ENCODE measurements at regions of chr17 and their contacts with region 1.

Region 1: DNA sequence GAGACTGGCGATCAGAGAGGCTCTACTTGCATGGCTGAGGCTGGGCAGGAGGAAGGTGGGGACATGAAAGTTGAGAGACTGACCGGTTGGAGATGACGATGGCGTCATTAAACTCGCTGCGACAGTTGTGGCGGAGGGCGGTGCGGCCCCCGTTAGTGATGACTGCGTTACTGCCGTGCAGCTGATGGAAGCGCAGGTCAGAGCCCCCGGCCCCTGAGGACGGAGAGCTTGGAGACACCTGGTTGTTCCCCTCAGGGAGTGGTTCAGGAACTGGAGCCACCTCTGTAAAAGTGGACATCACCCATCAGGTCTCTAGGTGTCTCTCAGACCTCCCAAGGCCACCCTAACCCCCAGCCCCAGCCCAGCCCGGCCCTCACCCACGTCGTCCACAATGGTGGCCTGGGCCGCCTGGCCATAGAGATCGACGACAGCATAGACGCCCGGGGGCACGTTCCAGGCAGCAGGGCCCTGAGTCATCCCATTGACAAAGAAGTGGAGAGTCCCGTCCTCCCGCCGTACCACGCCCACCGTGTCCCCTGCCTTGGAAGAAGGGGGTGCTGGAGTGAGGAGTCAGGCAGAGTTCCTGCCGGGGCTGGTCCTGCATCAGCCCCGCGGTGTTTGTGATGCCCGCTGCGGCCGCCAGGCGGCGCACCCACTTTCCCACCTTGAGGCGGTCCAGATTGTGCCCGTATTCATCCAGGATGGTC is 5.3 kb downstream of the NEURL4 start:
- DNase-seq: peak; percentile 78
- CTCF ChIP-seq: peak; percentile 80

Region 2: DNA sequence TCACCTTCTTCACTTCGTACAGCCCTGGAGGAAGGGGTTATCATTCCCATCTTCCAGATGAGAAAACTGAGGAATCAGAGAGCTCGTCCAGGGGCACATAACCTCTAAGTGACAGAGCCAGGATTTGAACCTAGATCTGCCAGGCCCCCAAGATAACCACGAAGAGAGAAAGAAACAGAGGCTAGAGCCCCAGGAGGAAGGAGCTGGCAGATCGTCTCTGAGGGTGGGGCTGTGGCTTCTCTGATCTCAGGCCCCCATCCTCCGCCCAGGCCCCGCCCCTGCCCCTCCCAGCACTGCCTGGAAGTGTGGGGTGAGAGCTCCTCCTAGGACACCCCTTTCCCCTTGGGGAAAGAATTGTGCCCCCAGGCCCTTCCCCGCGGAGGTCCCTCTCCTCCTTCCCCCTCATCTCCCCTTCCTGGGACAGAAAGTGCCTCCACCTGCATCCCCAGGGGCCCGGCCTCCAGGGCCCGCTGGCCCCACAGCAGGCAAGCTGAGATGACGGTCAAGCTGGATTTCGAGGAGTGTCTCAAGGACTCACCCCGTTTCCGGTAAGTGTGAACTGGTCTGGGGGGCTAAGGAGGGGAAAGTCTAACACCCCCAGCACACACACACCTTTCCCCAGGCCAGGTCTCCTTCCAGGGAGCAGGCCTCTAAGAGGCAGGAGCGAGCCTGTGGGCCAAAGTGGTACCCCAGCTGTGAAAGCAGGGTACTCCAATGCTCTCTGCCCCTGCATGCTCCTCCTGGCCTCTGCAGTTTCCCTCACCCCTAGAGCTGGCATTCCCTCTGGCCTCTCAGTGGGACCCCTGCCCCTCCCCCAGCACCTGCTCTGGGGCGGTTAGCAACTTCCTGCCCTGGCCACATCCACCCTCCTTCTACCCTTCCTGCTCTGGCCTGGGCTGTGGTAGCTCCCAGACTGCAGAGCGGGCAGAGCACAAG is 12.6 kb after region 1 on chr17 and contains the start of gene ACAP1:
- CTCF ChIA-PET with region 1: interaction called, 24 read pairs
- POLR2A ChIA-PET with region 1: no interaction called
- DNase-seq: peak; percentile 81
- CTCF ChIP-seq: peak; percentile 18

Region 3: GRCh38 chr17:7344399-7344798 is 20.5 kb after region 1 on chr17:
- CTCF ChIA-PET with region 1: interaction called, 15 read pairs
- POLR2A ChIA-PET with region 1: interaction called, 4 read pairs
- DNase-seq: no peak
- CTCF ChIP-seq: no peak

Region 4: GRCh38 chr17:7363311-7363710 is 39.4 kb after region 1 on chr17:
- CTCF ChIA-PET with region 1: no interaction called
- POLR2A ChIA-PET with region 1: no interaction called
- DNase-seq: no peak
- CTCF ChIP-seq: no peak